Aorta (tissue), 5 donors: ENCODE measurements at regions of chr15 and their contacts with region 1.

Region 1: DNA sequence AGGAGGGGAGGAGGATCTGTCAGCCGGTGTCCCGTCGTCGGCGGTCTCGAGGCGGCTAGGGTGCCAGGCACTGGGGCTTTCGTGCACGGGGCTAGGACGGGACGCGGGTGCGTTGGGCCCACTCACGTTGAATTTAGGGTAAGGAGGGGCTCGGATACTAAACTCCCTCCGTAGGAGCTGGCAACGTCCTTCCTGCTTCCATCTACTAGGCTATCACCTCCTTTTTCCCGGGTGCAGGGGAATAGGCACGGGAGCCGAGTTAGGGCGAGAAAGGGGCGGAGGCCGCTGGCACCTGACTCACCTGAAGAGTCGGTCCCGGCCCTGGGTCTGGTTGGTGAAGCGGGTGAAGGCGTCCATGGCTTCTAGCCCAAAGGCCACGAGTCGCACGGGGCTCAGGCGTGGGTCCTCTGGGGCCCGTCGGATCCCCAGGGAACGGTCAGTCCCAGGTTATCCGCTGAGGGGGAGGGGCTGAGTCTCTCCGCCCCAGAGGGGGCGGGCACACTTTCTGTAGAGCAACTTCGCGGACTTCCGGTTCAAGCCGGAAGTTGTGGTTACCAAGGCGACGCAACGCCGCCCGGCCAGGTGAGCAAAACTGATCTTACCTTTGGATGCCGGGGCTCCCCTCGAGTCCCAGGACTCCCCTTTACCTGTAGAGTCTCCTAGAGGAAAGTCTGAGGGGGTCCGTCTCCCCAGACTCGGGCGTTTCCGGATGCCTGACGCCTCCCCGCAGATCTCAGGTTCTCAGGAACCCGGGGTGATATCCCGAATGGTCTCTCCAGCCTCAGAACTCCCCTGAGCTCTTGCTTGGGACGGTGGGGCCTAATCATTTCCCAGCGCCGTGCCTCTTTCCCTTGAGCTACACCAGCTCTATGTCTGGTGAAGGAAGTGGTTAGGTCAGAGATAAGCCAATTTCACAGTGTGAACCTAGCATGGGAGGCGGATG is at the starts of genes PEX11A and WDR93:
- DNase-seq: peak; percentile 90 to 93
- ATAC-seq: peak; percentile 93
- H3K4me3 ChIP-seq: peak within 1 kb of the TSS; percentile 71 to 78
- H3K27ac ChIP-seq: no peak within 1 kb of the TSS
- H3K4me1 ChIP-seq: peaks cover 0 to 1% of the 10 kb centered on the region in 2 donors
- H3K27me3 ChIP-seq: no peaks in the 10 kb centered on the region
- total RNA-seq, gene PEX11A: 7.7 to 9.1 TPM
- total RNA-seq, gene WDR93: not detected

Region 2: DNA sequence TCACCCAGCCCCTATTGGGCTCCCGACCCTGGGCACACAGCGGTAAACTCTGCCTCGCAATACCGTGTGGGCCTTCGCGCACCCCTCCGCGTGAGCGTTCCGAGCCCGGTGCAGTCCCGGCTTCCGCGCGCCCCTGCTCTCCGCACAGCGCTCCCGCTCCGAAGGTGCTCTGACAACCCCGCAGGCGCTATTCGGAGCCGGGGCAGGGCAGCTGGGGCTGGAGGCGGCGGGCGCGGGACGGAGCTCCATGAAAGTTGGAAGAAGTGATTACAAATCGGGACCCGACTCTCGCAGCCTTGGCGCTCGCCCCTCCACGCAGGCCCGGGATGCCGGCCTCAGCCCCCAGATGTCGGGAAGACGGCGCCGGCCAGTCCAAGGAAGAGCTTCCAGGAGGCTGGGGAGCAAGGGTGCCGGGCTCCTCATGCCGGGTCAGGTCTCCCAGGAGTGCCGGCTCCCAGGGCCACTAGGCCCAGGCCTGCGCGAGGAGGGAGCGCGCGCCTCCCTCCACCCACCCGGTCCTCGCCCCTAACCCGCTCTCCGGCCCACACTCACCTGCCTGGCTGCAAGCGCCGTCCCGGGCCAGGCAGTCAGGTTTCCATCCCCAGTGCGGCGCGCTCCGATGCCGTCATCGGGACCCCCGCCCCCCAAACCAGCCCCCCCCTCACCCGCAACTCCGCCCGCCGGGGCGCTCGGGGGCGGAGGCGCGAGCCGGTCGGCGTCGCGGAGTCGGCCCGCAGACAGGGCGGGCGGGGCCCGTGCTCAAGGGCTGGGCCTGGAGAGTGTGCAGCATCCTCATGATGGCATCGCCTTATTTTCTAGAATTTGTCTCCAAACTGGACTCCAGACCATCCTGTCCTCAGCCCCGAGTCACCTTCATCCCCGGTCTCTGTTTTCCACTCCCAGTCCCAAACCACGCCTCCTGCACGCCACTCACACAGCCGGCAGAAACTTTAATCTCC is 35.4 kb before region 1 on chr15 and contains the start of gene KIF7:
- intact Hi-C with region 1: loop called in 1 of 2 experiments (anchors 2 kb)
- DNase-seq: peak in 1 of 2 donors; percentile 82
- ATAC-seq: peak; percentile 87
- H3K4me3 ChIP-seq: peak within 1 kb of the TSS; percentile 69 to 92
- H3K27ac ChIP-seq: peak within 1 kb of the TSS in 1 of 2 donors; percentile 59
- H3K4me1 ChIP-seq: no peaks in the 10 kb centered on the region
- H3K27me3 ChIP-seq: no peaks in the 10 kb centered on the region
- total RNA-seq, gene KIF7: 16.5 to 17.5 TPM